ENCODE measurements at regions of chr17 and their contacts with region 1.

Region 1: GRCh38 chr17:54452666-54453348 is 447.8 kb upstream of the TOM1L1 start:
- DNase-seq: no peak
- H3K4me3 ChIP-seq: no peak overlapping the region
- H3K27ac ChIP-seq: no peak overlapping the region
- H3K27me3 ChIP-seq: peaks cover 0 to 3% (median 0%) of the 10 kb centered on the region in 45 donors
- CTCF ChIP-seq: no peak

Region 2: DNA sequence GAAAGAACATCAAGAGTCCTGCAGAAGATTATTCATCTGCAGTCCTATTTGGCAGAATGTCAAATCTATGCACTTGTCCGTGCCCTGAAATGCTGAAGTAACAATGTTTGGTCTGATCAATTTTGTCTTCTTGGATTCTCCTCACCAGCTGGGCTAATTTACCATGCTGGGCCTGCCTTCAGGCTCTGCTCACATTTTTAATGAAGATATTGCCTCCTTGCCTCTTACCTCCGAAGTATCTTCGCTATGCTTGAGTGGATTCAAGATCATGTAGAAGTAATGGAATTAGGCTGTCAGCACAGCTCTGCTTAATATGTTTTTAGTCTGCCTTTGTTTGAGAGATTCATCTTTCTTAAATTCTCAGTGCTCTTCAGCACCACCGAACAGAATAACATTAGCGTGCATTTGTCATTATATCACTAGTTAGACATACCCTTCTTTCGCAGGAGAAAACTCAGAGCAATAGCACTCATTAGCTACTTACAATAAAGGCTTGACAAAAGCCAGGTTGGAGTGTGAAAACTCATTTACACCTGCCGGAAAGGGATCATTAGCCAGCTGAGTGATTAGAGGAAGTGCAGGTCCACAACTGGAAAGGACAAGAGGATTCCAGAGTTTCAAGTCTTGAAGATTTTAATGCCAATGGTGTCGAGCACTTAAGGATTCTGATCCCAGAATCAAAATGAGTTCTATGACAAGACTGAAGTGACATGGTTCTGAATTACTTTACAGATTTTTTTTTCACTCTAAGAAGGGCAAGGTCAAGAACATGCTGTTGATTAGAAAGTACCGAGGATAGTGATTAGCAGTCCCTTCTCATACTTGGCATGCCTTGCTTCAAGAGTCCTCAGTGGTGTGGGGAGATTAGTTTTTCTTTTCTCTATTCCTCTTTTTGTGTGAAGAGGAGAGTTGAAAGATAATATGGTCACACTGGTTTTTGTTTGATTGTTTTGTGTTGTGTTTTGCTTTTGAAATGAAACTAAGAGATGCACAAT is 42.2 kb after region 1 on chr17:
- intact Hi-C with region 1: loop called in 1 of 2 experiments (anchors 5 kb)
- DNase-seq: no peak
- H3K4me3 ChIP-seq: no peak overlapping the region
- H3K27ac ChIP-seq: no peak overlapping the region
- H3K27me3 ChIP-seq: no peaks in the 10 kb centered on the region
- CTCF ChIP-seq: no peak

Measured in dorsolateral prefrontal cortex (tissue), 120 donors.